Left cardiac atrium (tissue), 4 donors: ENCODE measurements at regions of chr4 and their contacts with region 1.

Region 1: DNA sequence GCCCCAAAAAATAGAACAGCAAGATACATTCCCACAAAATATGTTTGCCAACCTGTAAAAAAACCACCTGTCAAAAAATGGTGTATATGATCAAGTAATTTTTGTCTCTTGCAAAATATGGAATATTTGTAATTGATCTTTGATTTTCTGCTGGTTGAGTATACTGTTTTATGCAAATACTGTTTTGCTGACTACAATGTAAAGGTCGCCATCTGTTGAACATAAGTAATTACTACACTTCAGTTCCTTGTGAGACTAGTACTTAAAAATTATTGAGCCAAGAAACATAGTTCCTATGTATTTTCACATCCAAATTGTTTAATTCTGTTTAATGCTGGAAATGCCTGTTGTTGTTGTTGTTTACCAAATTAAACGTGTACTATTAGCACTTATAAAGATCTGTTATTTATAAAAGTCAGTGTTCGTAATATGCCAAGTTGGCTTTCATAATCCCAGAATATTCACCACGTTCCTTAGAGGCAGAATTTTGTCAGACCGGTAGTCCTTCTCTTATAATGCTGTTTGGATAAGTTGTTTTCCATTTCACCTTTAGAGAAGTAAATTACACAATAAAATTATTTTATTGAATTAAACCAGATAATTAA is 144.2 kb downstream of the PDLIM5 start:
- DNase-seq: no peak
- ATAC-seq: peak in 1 of 2 donors; percentile 29

Region 2: GRCh38 chr4:94349193-94349592 is 246.8 kb before region 1 on chr4:
- intact Hi-C with region 1: no loop called
- DNase-seq: no peak
- ATAC-seq: no peak

Region 3: GRCh38 chr4:94406668-94407437 is 189.1 kb before region 1 on chr4:
- intact Hi-C with region 1: loop called (anchors 5 to 10 kb)
- DNase-seq: peak; percentile 76
- ATAC-seq: peak; percentile 49 to 60

Region 4: GRCh38 chr4:94451695-94452475 is 144.1 kb before region 1 on chr4 and contains the start of gene PDLIM5:
- intact Hi-C with region 1: loop called in 1 of 2 experiments (anchors 10 kb)
- DNase-seq: peak; percentile 92
- ATAC-seq: peak; percentile 95 to 97
- total RNA-seq, gene PDLIM5: 626 to 644 TPM

Region 5: DNA sequence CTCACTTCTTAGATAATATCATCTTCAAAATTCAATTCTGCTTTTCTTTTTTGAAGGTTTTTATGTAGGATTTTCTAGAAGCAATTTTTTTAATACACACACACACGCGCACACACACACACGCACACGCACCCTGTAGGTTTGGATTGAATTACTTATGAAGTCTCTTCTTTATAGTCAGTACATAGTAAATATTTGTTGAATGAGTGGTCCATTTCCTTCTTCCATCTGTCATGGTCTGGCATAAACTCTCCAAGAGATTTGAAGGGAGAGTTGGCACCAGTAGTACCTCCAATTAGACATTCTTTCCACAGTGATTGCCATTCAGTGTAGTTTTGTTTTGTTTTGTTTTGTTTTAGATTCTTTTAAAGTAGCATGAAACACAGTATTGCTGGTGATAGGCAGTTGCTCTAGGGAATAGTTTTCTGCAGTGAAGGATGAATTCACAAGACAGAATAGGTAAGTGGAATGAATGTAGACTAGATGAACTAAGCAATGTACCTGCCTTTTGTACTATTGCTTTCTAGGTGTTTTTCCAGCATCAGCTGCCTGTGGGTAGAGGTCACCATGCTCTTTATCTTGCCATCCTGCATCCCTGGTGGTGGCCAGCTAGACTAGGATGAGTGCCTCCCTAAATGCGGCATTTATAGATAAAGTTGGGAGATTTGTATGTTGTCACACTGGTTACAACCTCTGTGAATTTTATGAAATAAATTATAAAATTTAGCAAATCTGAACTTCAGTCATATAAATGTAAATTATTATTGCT is 123.7 kb before region 1 on chr4:
- intact Hi-C with region 1: no loop called
- DNase-seq: no peak
- ATAC-seq: peak in 1 of 2 donors; percentile 64

Region 6: GRCh38 chr4:94516067-94516466 is 79.9 kb before region 1 on chr4:
- intact Hi-C with region 1: no loop called
- DNase-seq: no peak
- ATAC-seq: peak in 1 of 2 donors; percentile 35

Region 7: GRCh38 chr4:94534401-94535312 is 61.3 kb before region 1 on chr4:
- intact Hi-C with region 1: no loop called
- DNase-seq: no peak
- ATAC-seq: peak; percentile 32 to 41